Dendritic cell treated with granulocyte-macrophage colony-stimulating factor and Interleukin-4, amounts not matched to agents 40 ng/mL and 50 ng/mL, for 4 days (primary cell): ENCODE measurements at regions of chr7 and their contacts with region 1.

Region 1: DNA sequence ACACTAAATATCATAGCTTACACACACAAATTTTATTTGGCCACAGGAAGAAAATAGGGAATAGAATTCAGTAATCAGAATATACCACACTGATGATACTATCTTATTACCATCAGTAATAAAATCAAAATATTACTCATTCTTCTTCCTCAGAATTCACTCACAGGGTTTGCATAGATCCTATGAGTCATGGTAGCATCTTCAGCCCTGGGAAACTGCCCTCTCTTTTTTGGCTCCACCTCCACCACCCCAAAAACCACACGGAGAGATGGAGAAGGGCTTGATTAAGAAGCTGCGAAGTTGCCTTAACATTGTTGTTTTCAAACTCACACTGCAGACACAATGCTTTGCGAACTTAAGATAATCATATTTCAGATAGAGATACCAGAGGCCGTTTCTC is 154.1 kb upstream of the AHR start:
- H3K4me3 Mint-ChIP-seq: no peak overlapping the region
- H3K27ac Mint-ChIP-seq: peak overlapping the region; percentile 85
- H3K4me1 Mint-ChIP-seq: peaks cover 51% of the 10 kb centered on the region
- H3K27me3 Mint-ChIP-seq: no peaks in the 10 kb centered on the region

Region 2: DNA sequence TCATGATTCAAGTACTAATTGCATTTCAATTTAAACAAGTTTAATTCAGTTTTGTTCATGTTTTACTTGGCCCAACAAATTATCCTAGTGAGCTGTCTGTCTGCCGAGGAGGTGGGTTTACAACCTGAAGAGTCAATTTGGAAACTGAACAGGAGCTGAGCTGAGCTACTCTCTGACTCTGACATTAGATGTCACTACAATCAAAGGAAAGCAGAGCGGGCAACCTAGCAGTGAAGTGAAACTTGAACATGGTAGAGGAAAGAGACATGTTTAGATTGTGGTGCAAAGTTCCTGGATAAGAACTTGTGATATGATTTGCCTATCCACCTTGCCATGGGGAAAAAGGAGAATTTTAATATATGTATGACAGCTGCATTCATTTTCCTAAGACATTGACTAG is 253.0 kb before region 1 on chr7:
- intact Hi-C with region 1: no loop called
- H3K4me3 Mint-ChIP-seq: no peak overlapping the region
- H3K27ac Mint-ChIP-seq: no peak overlapping the region
- H3K4me1 Mint-ChIP-seq: no peaks in the 10 kb centered on the region
- H3K27me3 Mint-ChIP-seq: no peaks in the 10 kb centered on the region

Region 3: GRCh38 chr7:17071866-17072265 is 72.5 kb before region 1 on chr7:
- intact Hi-C with region 1: loop called (anchors 5 kb)
- H3K4me3 Mint-ChIP-seq: no peak overlapping the region
- H3K27ac Mint-ChIP-seq: no peak overlapping the region
- H3K4me1 Mint-ChIP-seq: peaks cover 30% of the 10 kb centered on the region
- H3K27me3 Mint-ChIP-seq: no peaks in the 10 kb centered on the region

Region 4: DNA sequence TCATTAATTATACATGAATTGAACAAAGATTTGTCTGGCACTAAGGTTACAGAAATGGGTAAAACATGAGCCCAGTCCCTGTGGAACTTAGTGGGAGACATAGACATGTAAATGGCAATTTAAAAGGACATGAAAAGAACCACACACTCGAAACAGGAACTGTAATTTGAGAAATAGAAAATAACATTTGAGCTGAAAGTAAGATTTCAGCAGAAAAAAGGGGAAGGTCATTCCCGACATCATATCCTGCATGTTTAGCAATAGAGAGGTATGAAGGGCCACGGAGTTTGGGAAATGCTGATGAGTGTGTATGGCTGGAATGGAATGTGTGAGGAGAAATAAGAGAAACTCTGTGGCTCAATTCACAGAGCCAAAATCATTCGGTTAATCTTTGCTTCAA is 21.3 kb before region 1 on chr7:
- intact Hi-C with region 1: loop called (anchors 2 kb)
- H3K4me3 Mint-ChIP-seq: no peak overlapping the region
- H3K27ac Mint-ChIP-seq: peak overlapping the region; percentile 76
- H3K4me1 Mint-ChIP-seq: peaks cover 49% of the 10 kb centered on the region
- H3K27me3 Mint-ChIP-seq: no peaks in the 10 kb centered on the region

Region 5: GRCh38 chr7:17176371-17177032 is 32.2 kb after region 1 on chr7:
- intact Hi-C with region 1: no loop called
- H3K4me3 Mint-ChIP-seq: no peak overlapping the region
- H3K27ac Mint-ChIP-seq: no peak overlapping the region
- H3K4me1 Mint-ChIP-seq: no peaks in the 10 kb centered on the region
- H3K27me3 Mint-ChIP-seq: no peaks in the 10 kb centered on the region